ENCODE measurements at regions of chr1 and their contacts with region 1.

Region 1: GRCh38 chr1:162696286-162696862 is 64.1 kb downstream of the DDR2 start:
- DNase-seq: peak; percentile 97
- H3K4me3 Mint-ChIP-seq: peak overlapping the region; percentile 10
- H3K27ac Mint-ChIP-seq: peak overlapping the region; percentile 36
- H3K4me1 Mint-ChIP-seq: peaks cover 33% of the 10 kb centered on the region
- H3K27me3 Mint-ChIP-seq: no peaks in the 10 kb centered on the region
- CTCF ChIP-seq: no peak

Region 2: GRCh38 chr1:162678439-162678838 is 17.9 kb before region 1 on chr1:
- CTCF ChIA-PET with region 1: interaction called, 37 read pairs
- POLR2A ChIA-PET with region 1: interaction called, 99 read pairs
- intact Hi-C with region 1: no loop called
- DNase-seq: peak; percentile 94
- H3K4me3 Mint-ChIP-seq: peak overlapping the region; percentile 51
- H3K27ac Mint-ChIP-seq: peak overlapping the region; percentile 89
- H3K4me1 Mint-ChIP-seq: peaks cover 48% of the 10 kb centered on the region
- H3K27me3 Mint-ChIP-seq: no peaks in the 10 kb centered on the region
- CTCF ChIP-seq: no peak

Region 3: GRCh38 chr1:162710345-162710744 is 14.0 kb after region 1 on chr1:
- CTCF ChIA-PET with region 1: interaction called, 11 read pairs
- POLR2A ChIA-PET with region 1: interaction called, 4 read pairs
- intact Hi-C with region 1: no loop called
- DNase-seq: no peak
- H3K4me3 Mint-ChIP-seq: no peak overlapping the region
- H3K27ac Mint-ChIP-seq: no peak overlapping the region
- H3K4me1 Mint-ChIP-seq: no peaks in the 10 kb centered on the region
- H3K27me3 Mint-ChIP-seq: no peaks in the 10 kb centered on the region
- CTCF ChIP-seq: no peak

Region 4: DNA sequence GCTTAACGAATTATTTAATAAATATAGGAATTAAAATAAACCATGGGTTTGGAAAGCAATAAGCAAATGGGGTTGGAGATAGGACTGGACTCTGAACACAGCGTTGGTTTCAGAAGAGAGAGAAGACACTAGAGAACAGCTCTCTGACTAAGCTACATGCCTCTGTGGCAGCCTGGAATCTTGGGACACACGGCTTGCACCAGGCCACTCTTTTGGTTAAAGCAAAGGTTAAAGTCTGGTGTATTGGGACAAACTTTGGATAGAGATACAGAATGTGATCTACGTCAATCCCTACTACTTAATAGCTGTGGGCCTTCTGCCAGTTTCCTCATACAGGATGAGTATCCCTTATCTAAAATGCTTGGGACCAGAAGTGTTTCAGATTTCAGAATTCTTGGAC is 44.4 kb after region 1 on chr1:
- CTCF ChIA-PET with region 1: no interaction called
- POLR2A ChIA-PET with region 1: no interaction called
- intact Hi-C with region 1: no loop called
- DNase-seq: no peak
- H3K4me3 Mint-ChIP-seq: no peak overlapping the region
- H3K27ac Mint-ChIP-seq: no peak overlapping the region
- H3K4me1 Mint-ChIP-seq: no peaks in the 10 kb centered on the region
- H3K27me3 Mint-ChIP-seq: no peaks in the 10 kb centered on the region
- CTCF ChIP-seq: no peak

Region 5: DNA sequence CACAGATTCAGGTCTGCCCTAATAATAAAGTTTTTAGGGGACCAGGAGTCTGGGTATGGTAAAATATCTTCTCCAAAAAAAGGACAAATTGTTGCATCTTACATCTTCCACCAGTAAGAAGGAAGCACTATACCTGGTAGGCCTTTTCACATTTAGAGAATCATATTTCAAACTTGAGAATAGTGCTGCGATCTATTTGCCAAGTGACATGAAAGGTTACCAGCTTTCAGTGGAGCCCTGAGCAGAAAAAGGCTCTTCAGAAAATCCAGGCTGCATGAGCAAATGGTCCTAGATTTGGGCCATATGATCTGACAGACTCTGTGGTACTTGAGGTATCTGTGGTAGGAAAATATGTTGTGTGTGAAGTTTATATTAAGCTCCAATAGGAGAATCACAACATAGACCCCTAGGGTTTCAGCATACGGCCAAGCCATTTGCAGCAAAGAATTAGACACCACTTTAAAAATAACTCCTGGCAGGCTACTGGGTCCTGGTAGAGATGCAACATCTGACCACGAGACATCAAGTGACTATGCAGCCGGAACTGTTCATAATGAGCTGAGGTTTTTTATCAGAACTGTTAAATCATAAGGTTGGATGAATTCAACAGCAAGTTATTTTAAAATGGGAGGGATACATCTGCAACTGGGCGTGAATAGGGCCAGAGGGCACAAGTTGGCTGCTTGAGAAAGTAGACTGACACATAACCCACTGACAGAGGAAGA is 203.2 kb after region 1 on chr1:
- CTCF ChIA-PET with region 1: no interaction called
- POLR2A ChIA-PET with region 1: no interaction called
- intact Hi-C with region 1: no loop called
- DNase-seq: no peak
- H3K4me3 Mint-ChIP-seq: no peak overlapping the region
- H3K27ac Mint-ChIP-seq: no peak overlapping the region
- H3K4me1 Mint-ChIP-seq: peaks cover 6% of the 10 kb centered on the region
- H3K27me3 Mint-ChIP-seq: no peaks in the 10 kb centered on the region
- CTCF ChIP-seq: no peak